ENCODE measurements at regions of chr4 and their contacts with region 1.

Region 1: DNA sequence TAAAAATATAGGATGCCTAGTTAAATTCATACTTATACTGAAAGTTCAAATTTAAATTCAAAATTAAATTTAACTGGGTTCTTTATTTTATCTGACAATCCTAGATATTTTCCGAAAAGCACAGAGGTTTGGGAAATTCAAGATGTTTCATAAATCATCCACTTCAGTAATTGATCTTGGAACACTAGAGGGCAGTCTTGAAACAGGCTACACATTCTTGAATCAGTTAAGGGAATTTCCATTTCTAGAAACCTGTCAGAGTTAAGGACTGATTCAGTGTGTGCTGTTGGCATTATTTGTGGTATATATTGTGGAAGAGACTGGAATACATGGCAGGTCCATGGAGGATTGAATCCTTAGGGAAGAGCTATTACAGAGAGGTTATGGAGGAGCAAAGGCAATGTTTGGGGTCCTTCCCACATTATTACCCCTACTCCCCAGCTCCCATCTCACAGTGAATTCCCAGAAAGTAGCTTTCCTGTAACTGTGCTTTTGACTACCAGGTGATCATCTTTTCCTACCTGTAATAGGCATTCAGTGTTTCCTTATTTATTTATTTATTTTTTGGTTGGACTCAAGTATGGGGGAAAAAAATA is 92.9 kb downstream of the EGF start:
- DNase-seq: peak in 4 of 5 donors; percentile 55 to 60 (median 57)
- H3K4me3 ChIP-seq: no peak overlapping the region
- H3K4me3 Mint-ChIP-seq: no peak overlapping the region
- H3K27ac ChIP-seq: no peak overlapping the region
- H3K27ac Mint-ChIP-seq: no peak overlapping the region
- H3K4me1 ChIP-seq: no peaks in the 10 kb centered on the region
- H3K4me1 Mint-ChIP-seq: peaks cover 3 to 8% (median 5%) of the 10 kb centered on the region in 4 donors
- H3K27me3 ChIP-seq: no peaks in the 10 kb centered on the region
- H3K27me3 Mint-ChIP-seq: no peaks in the 10 kb centered on the region

Region 2: GRCh38 chr4:109985993-109986974 is 19.3 kb before region 1 on chr4:
- CTCF ChIA-PET with region 1: no interaction called
- POLR2A ChIA-PET with region 1: no interaction called
- intact Hi-C with region 1: no loop called
- DNase-seq: no peak
- H3K4me3 ChIP-seq: no peak overlapping the region
- H3K4me3 Mint-ChIP-seq: no peak overlapping the region
- H3K27ac ChIP-seq: no peak overlapping the region
- H3K27ac Mint-ChIP-seq: no peak overlapping the region
- H3K4me1 ChIP-seq: no peaks in the 10 kb centered on the region
- H3K4me1 Mint-ChIP-seq: peaks cover 0 to 7% (median 3%) of the 10 kb centered on the region in 4 donors
- H3K27me3 ChIP-seq: no peaks in the 10 kb centered on the region
- H3K27me3 Mint-ChIP-seq: peaks cover 10 to 12% of the 10 kb centered on the region in 2 donors

Region 3: GRCh38 chr4:110020139-110020538 is 14.6 kb after region 1 on chr4:
- CTCF ChIA-PET with region 1: interaction called, 10 read pairs
- POLR2A ChIA-PET with region 1: no interaction called
- intact Hi-C with region 1: no loop called
- DNase-seq: no peak
- H3K4me3 ChIP-seq: no peak overlapping the region
- H3K4me3 Mint-ChIP-seq: peak overlapping the region in 1 of 8 donors; percentile 44
- H3K27ac ChIP-seq: no peak overlapping the region
- H3K27ac Mint-ChIP-seq: no peak overlapping the region
- H3K4me1 ChIP-seq: no peaks in the 10 kb centered on the region
- H3K4me1 Mint-ChIP-seq: peaks cover 11 to 19% (median 13%) of the 10 kb centered on the region in 4 donors
- H3K27me3 ChIP-seq: no peaks in the 10 kb centered on the region
- H3K27me3 Mint-ChIP-seq: peaks cover 0 to 1% of the 10 kb centered on the region in 2 donors

Region 4: DNA sequence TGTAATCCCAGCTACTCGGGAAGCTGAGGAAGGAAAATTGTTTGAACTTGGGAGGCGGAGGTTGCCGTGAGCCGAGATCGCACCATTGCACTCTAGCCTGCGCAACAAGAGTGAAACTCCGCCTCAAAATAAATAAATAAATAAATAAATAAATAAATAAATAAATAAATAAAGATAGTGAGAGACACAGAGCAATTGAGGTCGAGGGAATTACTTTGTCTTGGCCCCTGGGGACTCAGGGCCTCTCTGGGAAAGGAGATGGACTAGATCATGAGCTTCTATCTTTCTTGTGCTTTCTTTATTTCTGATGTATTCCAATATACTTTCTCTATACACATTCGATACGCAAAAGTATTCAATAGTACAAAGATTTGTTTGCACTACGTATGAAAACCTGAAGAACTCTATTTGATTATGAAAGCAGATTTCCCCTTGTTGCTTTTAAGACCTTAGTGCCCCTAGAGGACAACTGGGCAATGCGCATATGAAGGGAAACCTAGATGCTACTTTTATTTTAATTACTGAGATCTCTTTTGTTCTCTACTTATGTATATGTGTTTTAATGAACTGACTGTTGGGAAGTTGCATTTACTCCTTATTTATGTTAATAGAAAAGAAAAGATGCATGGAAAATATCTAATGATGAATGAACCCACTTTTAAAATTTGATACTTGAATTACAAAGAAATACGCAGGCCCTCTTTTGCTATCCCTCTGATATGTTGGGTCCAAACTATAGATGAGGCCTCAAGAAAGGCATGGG is 205.6 kb after region 1 on chr4:
- CTCF ChIA-PET with region 1: interaction called, 3 read pairs
- POLR2A ChIA-PET with region 1: no interaction called
- intact Hi-C with region 1: loop called (anchors 1 kb)
- DNase-seq: peak in 4 of 5 donors; percentile 39 to 48 (median 43)
- H3K4me3 ChIP-seq: no peak overlapping the region
- H3K4me3 Mint-ChIP-seq: peak overlapping the region in 3 of 8 donors; percentile 35 to 49 (median 36)
- H3K27ac ChIP-seq: no peak overlapping the region
- H3K27ac Mint-ChIP-seq: no peak overlapping the region
- H3K4me1 ChIP-seq: no peaks in the 10 kb centered on the region
- H3K4me1 Mint-ChIP-seq: peaks cover 0 to 5% (median 3%) of the 10 kb centered on the region in 4 donors
- H3K27me3 ChIP-seq: no peaks in the 10 kb centered on the region
- H3K27me3 Mint-ChIP-seq: peaks cover 2 to 3% of the 10 kb centered on the region in 2 donors

Region 5: DNA sequence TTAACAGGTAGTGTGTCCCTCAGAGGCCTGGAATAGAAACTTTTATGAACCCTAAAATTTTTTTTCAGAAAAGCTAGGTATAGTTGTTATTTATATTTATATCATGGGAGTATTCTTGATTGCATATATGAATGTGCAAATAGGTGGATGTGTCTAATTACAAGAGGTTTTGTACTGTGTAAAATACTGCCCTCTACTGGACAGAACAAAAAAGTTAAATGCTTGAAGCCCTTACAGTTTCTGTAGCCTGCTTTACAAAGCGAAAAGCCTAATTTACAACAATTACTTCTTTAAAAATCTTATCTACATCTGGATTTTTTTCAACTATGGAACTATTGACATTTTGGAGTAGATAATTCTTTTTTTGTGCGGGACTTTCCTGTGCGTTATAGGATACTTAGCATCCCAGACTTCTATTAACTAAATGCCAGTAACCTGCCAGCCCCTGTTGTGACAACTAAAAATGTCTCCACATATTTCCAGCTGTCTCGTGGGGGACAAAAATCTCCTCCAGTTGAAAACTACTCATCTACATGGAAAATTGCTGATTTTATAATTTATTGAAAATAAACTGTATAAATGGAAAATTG is 505.5 kb after region 1 on chr4:
- CTCF ChIA-PET with region 1: interaction called, 733 read pairs
- POLR2A ChIA-PET with region 1: no interaction called
- intact Hi-C with region 1: loop called (anchors 1 kb)
- DNase-seq: peak in 4 of 5 donors; percentile 46 to 55 (median 51)
- H3K4me3 ChIP-seq: no peak overlapping the region
- H3K4me3 Mint-ChIP-seq: no peak overlapping the region
- H3K27ac ChIP-seq: no peak overlapping the region
- H3K27ac Mint-ChIP-seq: no peak overlapping the region
- H3K4me1 ChIP-seq: peaks cover 11% of the 10 kb centered on the region
- H3K4me1 Mint-ChIP-seq: peaks cover 7 to 10% (median 9%) of the 10 kb centered on the region in 4 donors
- H3K27me3 ChIP-seq: no peaks in the 10 kb centered on the region
- H3K27me3 Mint-ChIP-seq: peaks cover 0 to 3% of the 10 kb centered on the region in 2 donors

Region 6: DNA sequence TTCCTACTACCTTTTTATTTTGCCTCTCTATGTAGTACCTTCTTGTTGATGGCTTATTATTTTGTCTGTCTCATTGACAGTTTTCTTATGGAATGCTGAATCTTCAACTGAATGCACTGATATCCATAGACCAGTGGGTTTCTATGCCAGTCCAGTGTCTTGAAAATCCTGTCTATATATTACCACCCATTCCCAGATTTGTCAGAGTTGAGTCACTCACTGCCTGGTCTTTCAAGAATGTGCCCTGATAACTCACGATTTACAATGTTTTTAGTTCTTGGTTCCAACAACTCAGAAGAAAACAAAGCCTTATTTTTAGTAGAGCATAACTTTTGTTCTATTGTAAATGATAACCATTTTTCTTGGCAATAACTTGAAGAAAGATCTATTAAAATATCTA is 1223.3 kb after region 1 on chr4:
- CTCF ChIA-PET with region 1: no interaction called
- POLR2A ChIA-PET with region 1: no interaction called
- intact Hi-C with region 1: no loop called
- DNase-seq: no peak
- H3K4me3 ChIP-seq: no peak overlapping the region
- H3K4me3 Mint-ChIP-seq: no peak overlapping the region
- H3K27ac ChIP-seq: no peak overlapping the region
- H3K27ac Mint-ChIP-seq: no peak overlapping the region
- H3K4me1 ChIP-seq: no peaks in the 10 kb centered on the region
- H3K4me1 Mint-ChIP-seq: no peaks in the 10 kb centered on the region
- H3K27me3 ChIP-seq: no peaks in the 10 kb centered on the region
- H3K27me3 Mint-ChIP-seq: no peaks in the 10 kb centered on the region

Region 7: DNA sequence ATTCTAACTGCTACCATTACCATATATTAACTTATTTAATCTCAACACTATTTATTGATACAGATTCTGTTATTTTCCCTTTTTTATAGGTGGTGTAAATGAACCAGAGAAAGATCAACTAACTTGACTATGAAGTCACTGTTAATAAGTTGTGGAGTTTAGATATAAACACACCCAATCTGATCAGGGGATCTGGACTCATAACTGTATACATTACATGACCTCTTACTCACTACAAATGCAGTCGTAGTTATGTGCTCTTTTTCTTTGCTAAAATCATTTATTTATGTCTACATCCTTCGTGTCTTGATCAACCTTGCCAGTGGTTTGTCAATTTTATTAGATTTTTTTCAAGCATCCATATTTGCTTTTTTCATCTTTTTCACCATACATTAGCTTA is 1524.9 kb after region 1 on chr4:
- CTCF ChIA-PET with region 1: no interaction called
- POLR2A ChIA-PET with region 1: no interaction called
- intact Hi-C with region 1: no loop called
- DNase-seq: no peak
- H3K4me3 ChIP-seq: no peak overlapping the region
- H3K4me3 Mint-ChIP-seq: no peak overlapping the region
- H3K27ac ChIP-seq: no peak overlapping the region
- H3K27ac Mint-ChIP-seq: no peak overlapping the region
- H3K4me1 ChIP-seq: no peaks in the 10 kb centered on the region
- H3K4me1 Mint-ChIP-seq: no peaks in the 10 kb centered on the region
- H3K27me3 ChIP-seq: no peaks in the 10 kb centered on the region
- H3K27me3 Mint-ChIP-seq: no peaks in the 10 kb centered on the region

Measured in CD4-positive, alpha-beta memory T cell (primary cell).